Activated CD4-positive, alpha-beta T cell treated with anti-CD3 and anti-CD28 coated beads for 36 hours (primary cell): ENCODE measurements at regions of chr17 and their contacts with region 1.

Region 1: DNA sequence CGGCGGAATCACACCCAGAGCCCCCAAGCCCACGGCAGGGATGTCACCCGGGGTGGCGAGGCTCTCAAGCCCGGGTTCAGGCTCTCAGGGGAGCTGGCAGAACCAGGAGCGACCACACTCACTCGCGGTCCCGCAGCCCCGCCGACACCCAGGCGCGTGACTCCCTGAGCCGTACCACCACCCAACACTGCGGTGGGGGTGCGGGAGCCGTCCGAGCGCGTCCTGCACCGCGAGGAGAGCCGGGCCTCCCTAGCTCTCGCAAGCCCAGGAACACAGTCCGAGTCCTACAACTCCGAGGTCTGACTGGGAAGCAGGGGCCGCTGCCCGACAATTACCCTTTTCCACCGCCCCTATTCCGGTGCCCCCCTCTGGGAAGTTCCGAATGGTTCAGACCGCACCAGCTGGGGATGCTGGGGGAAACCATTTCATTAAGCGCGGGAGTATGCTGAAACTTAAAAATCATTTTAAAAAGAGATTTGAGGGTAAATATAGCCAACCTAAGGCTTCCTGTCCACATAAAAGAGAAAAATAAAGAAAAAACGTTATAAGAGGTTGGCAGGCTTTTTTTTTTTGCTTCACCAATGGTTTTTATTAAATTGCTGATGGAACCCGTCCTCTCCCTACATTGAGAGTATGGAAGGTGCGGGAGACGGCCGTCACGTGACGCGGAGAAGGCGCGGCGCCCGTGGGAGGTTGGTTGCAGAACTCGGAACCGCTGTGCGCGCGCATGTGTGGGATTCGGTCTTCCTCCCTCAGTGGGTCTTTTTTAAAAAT is at the start of gene FLCN:
- DNase-seq: peak; percentile 93
- ATAC-seq: peak; percentile 90
- H3K4me3 Mint-ChIP-seq: peak within 1 kb of the TSS; percentile 81
- H3K27ac Mint-ChIP-seq: peak within 1 kb of the TSS; percentile 98
- H3K4me1 Mint-ChIP-seq: peaks cover 31% of the 10 kb centered on the region
- H3K27me3 Mint-ChIP-seq: no peaks in the 10 kb centered on the region
- total RNA-seq, gene FLCN: 12.3 to 18.8 TPM

Region 2: GRCh38 chr17:16653209-16654041 is 583.8 kb before region 1 on chr17 and contains the start of gene ZNF624:
- CTCF ChIA-PET with region 1: no interaction called
- POLR2A ChIA-PET with region 1: no interaction called
- intact Hi-C with region 1: loop called in 1 of 2 experiments (anchors 1 kb)
- DNase-seq: peak; percentile 94
- ATAC-seq: peak; percentile 97
- H3K4me3 Mint-ChIP-seq: peak within 1 kb of the TSS; percentile 81
- H3K27ac Mint-ChIP-seq: peak within 1 kb of the TSS; percentile 73
- H3K4me1 Mint-ChIP-seq: peaks cover 18% of the 10 kb centered on the region
- H3K27me3 Mint-ChIP-seq: peaks cover 5% of the 10 kb centered on the region
- total RNA-seq, gene ZNF624: 3.7 to 4.4 TPM

Region 3: GRCh38 chr17:17041571-17042380 is 195.4 kb before region 1 on chr17:
- CTCF ChIA-PET with region 1: no interaction called
- POLR2A ChIA-PET with region 1: no interaction called
- intact Hi-C with region 1: loop called in 1 of 2 experiments (anchors 1 kb)
- DNase-seq: peak; percentile 98
- ATAC-seq: peak; percentile 99
- H3K4me3 Mint-ChIP-seq: peak overlapping the region; percentile 69
- H3K27ac Mint-ChIP-seq: no peak overlapping the region
- H3K4me1 Mint-ChIP-seq: peaks cover 44% of the 10 kb centered on the region
- H3K27me3 Mint-ChIP-seq: no peaks in the 10 kb centered on the region

Region 4: GRCh38 chr17:17151962-17152361 is 85.3 kb before region 1 on chr17:
- CTCF ChIA-PET with region 1: no interaction called
- POLR2A ChIA-PET with region 1: no interaction called
- intact Hi-C with region 1: loop called in 1 of 2 experiments (anchors 2 kb)
- DNase-seq: peak; percentile 69
- ATAC-seq: peak; percentile 48
- H3K4me3 Mint-ChIP-seq: no peak overlapping the region
- H3K27ac Mint-ChIP-seq: peak overlapping the region; percentile 75
- H3K4me1 Mint-ChIP-seq: peaks cover 62% of the 10 kb centered on the region
- H3K27me3 Mint-ChIP-seq: no peaks in the 10 kb centered on the region

Region 5: GRCh38 chr17:17206124-17206912 is 30.9 kb before region 1 on chr17 and contains the start of gene PLD6:
- CTCF ChIA-PET with region 1: interaction called, 3 read pairs
- POLR2A ChIA-PET with region 1: interaction called, 9 read pairs
- intact Hi-C with region 1: loop called (anchors 1 kb)
- DNase-seq: peak; percentile 96
- ATAC-seq: peak; percentile 77
- H3K4me3 Mint-ChIP-seq: peak within 1 kb of the TSS; percentile 90
- H3K27ac Mint-ChIP-seq: peak within 1 kb of the TSS; percentile 97
- H3K4me1 Mint-ChIP-seq: peaks cover 25% of the 10 kb centered on the region
- H3K27me3 Mint-ChIP-seq: no peaks in the 10 kb centered on the region
- total RNA-seq, gene PLD6: 8.3 to 9.9 TPM

Region 6: DNA sequence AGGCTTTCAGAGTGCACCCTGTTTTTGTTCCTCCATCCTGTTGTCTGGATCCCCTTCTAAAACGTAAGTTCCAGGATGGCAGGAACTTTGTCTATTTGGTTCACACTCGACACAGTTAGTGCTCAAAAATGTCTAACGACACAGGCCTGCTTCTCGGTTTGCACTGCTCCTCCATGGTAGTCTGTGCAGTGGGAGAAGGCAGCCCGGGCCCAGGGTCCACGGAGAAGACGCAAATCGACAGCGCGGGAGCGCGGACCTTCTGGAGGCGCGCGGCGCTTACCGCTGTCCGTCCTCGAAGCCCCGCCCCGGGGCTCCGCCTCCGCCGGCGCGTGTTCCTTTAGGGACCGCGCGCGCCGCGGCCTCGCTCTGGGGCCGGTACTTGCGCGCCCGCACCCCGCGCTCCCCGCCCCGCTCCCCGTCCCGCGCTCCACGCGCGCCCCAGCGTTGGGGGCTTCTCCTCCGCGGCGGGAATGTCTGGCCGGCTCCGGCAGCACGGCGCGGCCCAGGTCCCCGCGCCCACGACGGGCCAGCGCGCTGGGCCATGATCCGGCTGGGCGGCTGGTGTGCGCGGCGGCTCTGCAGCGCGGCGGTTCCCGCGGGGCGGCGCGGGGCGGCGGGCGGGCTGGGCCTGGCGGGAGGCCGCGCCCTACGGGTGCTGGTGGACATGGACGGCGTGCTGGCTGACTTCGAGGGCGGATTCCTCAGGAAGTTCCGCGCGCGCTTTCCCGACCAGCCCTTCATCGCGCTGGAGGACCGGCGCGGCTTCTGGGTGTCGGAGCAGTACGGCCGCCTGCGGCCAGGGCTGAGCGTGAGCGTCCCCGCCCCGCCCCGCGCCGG is 66.0 kb after region 1 on chr17 and contains the start of gene NT5M:
- CTCF ChIA-PET with region 1: no interaction called
- POLR2A ChIA-PET with region 1: no interaction called
- intact Hi-C with region 1: loop called in 1 of 2 experiments (anchors 1 kb)
- DNase-seq: peak; percentile 84
- ATAC-seq: peak; percentile 58
- H3K4me3 Mint-ChIP-seq: peak within 1 kb of the TSS; percentile 71
- H3K27ac Mint-ChIP-seq: peak within 1 kb of the TSS; percentile 87
- H3K4me1 Mint-ChIP-seq: peaks cover 28% of the 10 kb centered on the region
- H3K27me3 Mint-ChIP-seq: no peaks in the 10 kb centered on the region
- total RNA-seq, gene NT5M: 4.3 to 5.4 TPM

Region 7: DNA sequence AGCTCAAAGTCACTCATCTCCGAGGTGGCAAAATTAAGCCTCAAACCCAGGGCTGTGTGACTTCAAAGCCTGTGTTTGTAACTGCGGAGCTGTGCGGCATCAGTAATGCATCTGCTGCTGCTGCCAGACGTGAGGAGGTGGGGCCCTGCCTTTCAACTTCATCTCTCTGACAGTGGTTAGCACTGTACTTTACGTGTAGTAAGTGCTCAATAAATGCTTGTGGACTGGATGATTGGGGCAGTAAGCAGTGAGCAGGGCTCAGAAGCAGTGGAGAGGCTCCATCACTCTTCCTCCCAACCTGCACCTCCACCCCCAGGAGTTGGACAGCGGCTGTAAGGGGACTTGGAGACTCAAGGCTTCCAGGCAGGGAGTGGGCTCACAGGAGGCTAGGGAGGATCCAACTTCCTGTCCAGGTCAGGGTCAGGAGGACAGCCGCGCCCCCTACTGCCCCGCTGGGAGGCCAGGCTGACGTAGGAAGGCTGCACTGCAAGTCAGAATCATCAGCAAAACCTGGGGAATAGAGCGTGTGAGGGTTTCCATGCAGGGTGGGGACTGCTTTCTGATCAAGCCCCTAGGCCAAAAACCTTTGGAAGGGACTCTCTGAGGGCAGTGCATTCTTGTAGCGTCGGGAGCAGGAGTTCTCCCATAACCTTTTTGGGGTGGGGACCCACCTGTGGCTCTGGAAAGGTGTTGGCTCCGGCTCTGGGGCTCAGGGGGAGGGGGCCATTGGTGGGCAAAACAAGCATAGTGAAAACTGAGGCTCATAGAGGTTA is 465.8 kb after region 1 on chr17:
- CTCF ChIA-PET with region 1: no interaction called
- POLR2A ChIA-PET with region 1: no interaction called
- intact Hi-C with region 1: no loop called
- DNase-seq: no peak
- ATAC-seq: no peak
- H3K4me3 Mint-ChIP-seq: no peak overlapping the region
- H3K27ac Mint-ChIP-seq: no peak overlapping the region
- H3K4me1 Mint-ChIP-seq: peaks cover 7% of the 10 kb centered on the region
- H3K27me3 Mint-ChIP-seq: no peaks in the 10 kb centered on the region